ENCODE measurements at regions of chr19 and their contacts with region 1.

Region 1: GRCh38 chr19:55467236-55468053 is 2.9 kb upstream of the C19orf85 start:
- DNase-seq: peak; percentile 58
- H3K4me3 Mint-ChIP-seq: no peak overlapping the region
- H3K27ac Mint-ChIP-seq: no peak overlapping the region
- H3K4me1 Mint-ChIP-seq: peaks cover 2% of the 10 kb centered on the region
- H3K27me3 Mint-ChIP-seq: no peaks in the 10 kb centered on the region

Region 2: DNA sequence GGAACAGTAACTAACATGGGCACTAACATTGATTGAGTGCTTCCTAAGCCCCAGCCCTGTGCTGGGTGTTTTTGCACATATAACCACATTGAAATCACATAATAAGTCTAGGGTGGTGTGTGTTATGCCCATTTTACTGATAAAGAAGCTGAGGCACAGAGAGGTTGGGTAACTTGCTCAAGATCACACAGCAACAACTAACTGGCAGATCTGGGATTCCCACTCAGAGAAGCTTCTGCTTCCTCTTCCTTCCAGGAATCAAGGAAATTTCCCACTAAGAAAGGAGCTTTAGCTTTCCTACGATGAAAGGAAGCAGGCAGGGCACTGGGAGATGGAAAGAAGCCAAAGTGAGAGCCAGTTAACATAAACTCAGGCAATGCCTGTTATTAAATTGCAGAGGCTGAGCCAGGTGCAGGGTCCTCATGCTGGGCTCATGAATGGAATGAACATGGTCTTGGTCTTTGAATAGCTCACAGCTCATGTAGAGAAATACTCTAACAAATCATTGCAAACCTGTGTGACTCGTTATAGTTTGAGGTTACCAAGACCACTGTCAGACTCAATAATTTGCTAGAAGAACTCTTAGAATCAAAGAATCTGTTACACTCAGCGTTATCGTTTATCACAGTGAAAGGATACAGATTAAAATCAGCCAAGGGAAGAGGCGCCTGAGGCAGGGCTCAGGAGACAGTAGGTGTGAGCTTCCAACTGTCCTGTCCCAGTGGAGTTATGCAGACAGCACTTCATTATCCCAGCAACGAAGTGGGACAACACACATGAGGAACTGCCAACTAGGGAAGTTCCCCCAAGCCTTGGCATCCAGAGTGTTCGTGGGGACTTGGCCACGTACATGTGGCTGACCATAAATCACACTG is 31.0 kb after region 1 on chr19:
- CTCF ChIA-PET with region 1: interaction called, 64 read pairs
- intact Hi-C with region 1: no loop called
- DNase-seq: no peak
- H3K4me3 Mint-ChIP-seq: no peak overlapping the region
- H3K27ac Mint-ChIP-seq: no peak overlapping the region
- H3K4me1 Mint-ChIP-seq: peaks cover 10% of the 10 kb centered on the region
- H3K27me3 Mint-ChIP-seq: no peaks in the 10 kb centered on the region

Region 3: DNA sequence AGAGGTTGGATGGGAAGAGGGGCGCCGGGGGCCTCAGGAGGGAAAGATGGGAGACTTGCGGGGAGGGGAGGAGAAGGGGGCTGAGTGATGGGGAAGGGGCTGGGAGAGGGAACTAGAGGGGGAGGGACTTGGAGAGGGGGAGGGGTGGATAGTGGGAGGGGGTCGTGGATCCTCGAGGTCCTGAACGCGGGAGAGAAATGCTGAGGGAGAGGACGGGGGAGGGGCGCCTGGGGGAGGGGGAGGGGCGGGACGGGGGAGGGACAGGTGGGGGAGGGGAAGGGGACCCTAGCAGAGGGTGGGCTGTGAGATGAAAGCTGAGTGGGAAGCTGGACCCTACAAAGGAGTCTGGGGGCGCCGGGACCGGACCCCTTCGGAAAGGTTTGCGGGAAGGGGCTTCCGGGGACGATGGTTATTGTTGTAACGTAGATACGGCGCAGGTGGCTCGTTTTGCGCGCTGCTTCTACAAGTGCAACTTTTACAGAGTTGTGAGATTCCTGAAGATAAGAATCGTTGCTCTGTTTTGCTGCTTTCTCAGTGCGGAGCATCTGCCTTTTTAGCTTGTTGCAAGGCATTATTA is 674.1 kb after region 1 on chr19:
- CTCF ChIA-PET with region 1: no interaction called
- intact Hi-C with region 1: no loop called
- DNase-seq: peak; percentile 46
- H3K4me3 Mint-ChIP-seq: peak overlapping the region; percentile 97
- H3K27ac Mint-ChIP-seq: peak overlapping the region; percentile 95
- H3K4me1 Mint-ChIP-seq: peaks cover 35% of the 10 kb centered on the region
- H3K27me3 Mint-ChIP-seq: no peaks in the 10 kb centered on the region